Kidney (tissue), 22 donors: ENCODE measurements at regions of chr5 and their contacts with region 1.

Region 1: DNA sequence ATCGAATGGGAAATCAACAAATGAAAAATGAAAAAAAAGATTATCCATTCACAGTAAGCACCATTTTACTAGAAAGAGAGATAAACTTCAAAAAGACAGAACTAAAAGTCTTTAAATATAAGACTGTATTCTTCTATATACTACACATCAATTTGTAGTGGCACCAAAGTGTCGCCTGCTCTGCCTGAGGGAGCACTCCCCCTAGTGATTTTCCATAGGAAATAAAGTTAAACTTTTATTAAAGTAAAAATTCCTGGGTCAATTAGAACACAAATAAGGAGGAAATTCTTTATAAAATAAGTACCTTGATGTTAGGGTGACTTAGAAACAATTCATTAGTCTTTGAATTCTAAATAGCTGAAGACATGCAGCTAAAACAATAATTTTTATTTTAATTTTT is 9.7 kb downstream of the RAD1 start:
- DNase-seq: peak in 2 of 5 donors; percentile 10 to 24
- H3K4me3 ChIP-seq: no peak overlapping the region
- H3K27ac ChIP-seq: no peak overlapping the region
- H3K4me1 ChIP-seq: no peaks in the 10 kb centered on the region
- H3K27me3 ChIP-seq: no peaks in the 10 kb centered on the region
- CTCF ChIP-seq: no peak

Region 2: DNA sequence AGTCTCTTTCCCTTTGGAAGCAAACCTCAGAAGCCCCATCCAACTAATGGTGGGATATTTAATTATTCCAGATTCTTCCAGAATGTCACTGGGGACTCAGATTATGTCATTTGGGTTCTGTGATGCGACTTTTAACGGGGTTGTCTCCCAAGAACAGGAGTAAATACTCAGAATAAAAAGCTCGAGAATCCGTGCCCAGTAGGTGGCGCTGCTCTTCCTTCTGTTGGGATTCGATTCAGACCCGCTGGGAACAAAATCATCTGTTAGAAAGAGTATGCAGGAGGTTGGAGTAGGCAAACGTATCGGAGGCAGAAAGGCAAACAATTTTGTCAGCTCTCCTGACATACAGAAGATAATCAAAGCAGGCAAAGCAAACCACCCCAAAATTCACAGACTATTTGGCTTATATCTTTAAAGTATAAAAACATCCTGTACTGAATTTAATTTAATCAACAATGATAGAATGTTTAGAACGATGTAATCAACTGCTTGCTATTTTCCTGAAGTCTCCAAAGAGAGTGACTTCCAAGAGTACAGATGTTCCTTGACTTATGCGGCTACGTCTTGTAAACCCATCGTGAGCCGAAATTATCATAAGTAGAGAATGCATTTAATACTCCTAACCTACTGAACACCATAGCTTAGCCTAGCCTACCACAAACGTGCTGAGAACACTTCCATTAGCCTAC is 419.3 kb before region 1 on chr5:
- intact Hi-C with region 1: loop called (anchors 10 kb)
- DNase-seq: peak; percentile 81 to 95 (median 87)
- H3K4me3 ChIP-seq: no peak overlapping the region
- H3K27ac ChIP-seq: no peak overlapping the region
- H3K4me1 ChIP-seq: peaks cover 0 to 14% (median 6%) of the 10 kb centered on the region in 3 donors
- H3K27me3 ChIP-seq: no peaks in the 10 kb centered on the region
- CTCF ChIP-seq: peak; percentile 80

Region 3: DNA sequence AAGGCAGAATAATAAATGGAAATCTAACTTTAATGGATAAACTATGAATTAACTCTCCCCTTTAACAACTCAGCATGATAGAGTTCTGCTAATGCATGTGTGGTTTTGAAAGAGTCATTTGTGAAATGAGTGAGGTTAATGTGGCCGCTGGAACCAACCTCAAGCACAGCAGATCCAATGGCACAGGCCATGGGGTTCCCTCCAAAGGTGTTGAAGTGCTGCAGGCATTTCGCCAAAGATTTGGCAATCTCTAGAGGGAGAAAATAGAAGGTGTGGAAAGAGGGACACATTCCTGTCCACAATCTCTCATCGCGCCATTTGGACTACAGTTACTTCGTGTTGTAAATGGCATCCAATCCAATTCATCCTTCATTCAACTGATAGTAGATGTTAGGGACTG is 107.2 kb after region 1 on chr5:
- intact Hi-C with region 1: no loop called
- DNase-seq: no peak
- H3K4me3 ChIP-seq: no peak overlapping the region
- H3K27ac ChIP-seq: no peak overlapping the region
- H3K4me1 ChIP-seq: no peaks in the 10 kb centered on the region
- H3K27me3 ChIP-seq: no peaks in the 10 kb centered on the region
- CTCF ChIP-seq: no peak